CD4-positive, alpha-beta T cell (primary cell): ENCODE measurements at regions of chr10 and their contacts with region 1.

Region 1: DNA sequence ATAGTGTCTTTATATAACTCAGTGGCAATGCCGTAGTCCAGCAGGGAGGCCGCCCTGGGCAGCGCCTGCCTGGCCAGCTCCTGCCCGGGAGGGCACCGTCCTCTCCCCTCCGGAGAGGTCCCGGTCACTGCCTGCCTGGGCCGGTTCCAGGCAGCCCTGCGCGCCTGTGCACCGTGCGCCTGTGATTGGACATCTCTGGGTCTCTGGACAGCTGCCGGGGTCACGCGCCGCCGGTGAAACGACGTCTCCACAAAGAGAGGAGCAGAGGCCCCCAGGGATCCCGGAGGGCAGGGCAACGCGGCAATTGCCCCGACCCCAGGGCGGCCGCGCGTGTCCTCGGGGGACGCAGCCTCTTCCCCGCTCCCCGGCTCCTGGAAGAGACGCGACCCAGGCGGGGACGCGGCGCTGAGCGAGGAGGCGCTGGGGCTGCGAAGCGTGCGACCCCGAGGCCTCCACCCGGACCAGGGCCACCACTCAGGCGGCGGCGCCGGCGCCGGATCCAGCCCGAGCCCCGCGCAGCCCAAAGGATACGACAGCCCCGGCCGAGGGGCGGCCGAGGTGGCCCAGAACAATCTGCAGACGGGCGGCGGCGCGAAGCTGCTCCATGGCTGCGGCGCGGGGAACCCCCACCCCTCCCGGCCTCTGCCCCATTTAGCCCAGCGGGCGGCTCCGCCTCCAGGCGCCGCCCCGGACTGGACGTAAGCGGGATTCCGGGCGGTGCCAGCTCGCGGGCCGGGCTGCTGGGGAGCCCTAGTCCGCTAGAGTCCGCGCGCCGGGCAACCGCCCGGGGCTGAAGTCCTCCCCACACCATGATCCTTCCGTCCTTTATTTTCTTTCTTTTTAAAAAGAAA is at the start of gene PHYH:
- DNase-seq: peak; percentile 58 to 94 (median 74)
- ATAC-seq: peak; percentile 50
- H3K4me3 ChIP-seq: peak within 1 kb of the TSS; percentile 71
- H3K4me3 Mint-ChIP-seq: peak within 1 kb of the TSS; percentile 91
- H3K27ac ChIP-seq: peak within 1 kb of the TSS; percentile 85 to 89
- H3K27ac Mint-ChIP-seq: peak within 1 kb of the TSS; percentile 94
- H3K4me1 ChIP-seq: peaks cover 36% of the 10 kb centered on the region
- H3K4me1 Mint-ChIP-seq: peaks cover 24% of the 10 kb centered on the region
- H3K27me3 ChIP-seq: no peaks in the 10 kb centered on the region
- H3K27me3 Mint-ChIP-seq: no peaks in the 10 kb centered on the region
- CTCF ChIP-seq: no peak
- total RNA-seq, gene PHYH: 8.5 to 10.0 TPM

Region 2: DNA sequence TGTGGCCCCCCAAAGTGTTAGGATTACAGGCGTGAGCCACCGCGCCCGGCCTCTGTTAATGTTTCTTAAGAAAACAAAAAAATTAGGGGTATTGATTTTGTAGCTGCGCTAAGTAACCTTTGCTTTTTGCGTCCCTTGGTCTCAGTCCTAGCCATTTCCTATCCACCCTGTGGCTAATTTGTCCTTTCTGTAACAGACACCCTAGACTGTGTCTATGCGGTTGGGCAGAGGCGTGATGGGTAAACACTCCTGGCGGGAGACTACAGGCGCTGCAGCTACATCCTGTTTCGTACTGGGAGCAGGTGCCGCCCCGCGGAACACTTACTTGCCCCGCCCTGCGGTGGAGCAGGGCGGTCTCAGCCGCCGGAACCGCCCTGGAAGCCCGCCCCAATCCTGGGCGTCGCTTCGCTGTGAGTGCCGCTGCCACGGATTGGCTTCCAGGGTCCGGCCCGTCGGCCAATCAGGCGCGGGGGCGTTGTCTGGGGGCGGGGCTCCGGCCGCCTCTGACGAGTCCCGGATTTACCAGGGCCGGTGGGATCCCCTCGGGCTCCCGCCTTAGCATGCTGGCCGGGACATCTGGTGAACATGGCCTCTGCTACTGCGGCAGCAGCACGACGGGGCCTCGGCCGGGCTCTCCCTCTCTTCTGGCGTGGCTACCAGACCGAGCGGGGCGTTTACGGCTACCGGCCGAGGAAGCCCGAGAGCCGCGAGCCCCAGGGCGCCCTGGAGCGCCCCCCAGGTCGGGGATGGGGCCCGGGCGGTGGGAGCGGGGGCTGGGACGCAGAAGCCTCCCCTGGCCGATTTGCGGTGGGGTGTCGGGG is 1231.0 kb before region 1 on chr10 and contains the start of gene DHTKD1:
- CTCF ChIA-PET with region 1: no interaction called
- POLR2A ChIA-PET with region 1: no interaction called
- intact Hi-C with region 1: loop called in 1 of 2 experiments (anchors 5 kb)
- DNase-seq: peak; percentile 95 to 99 (median 98)
- ATAC-seq: peak; percentile 98
- H3K4me3 ChIP-seq: peak within 1 kb of the TSS; percentile 85
- H3K4me3 Mint-ChIP-seq: peak within 1 kb of the TSS; percentile 91
- H3K27ac ChIP-seq: peak within 1 kb of the TSS; percentile 73 to 78
- H3K27ac Mint-ChIP-seq: peak within 1 kb of the TSS; percentile 95
- H3K4me1 ChIP-seq: peaks cover 15% of the 10 kb centered on the region
- H3K4me1 Mint-ChIP-seq: peaks cover 16% of the 10 kb centered on the region
- H3K27me3 ChIP-seq: no peaks in the 10 kb centered on the region
- H3K27me3 Mint-ChIP-seq: no peaks in the 10 kb centered on the region
- CTCF ChIP-seq: peak; percentile 27
- total RNA-seq, gene DHTKD1: 5.1 to 5.3 TPM

Region 3: GRCh38 chr10:13099666-13100348 is 199.9 kb before region 1 on chr10 and contains the start of gene OPTN:
- CTCF ChIA-PET with region 1: interaction called, 14 read pairs
- POLR2A ChIA-PET with region 1: interaction called, 22 read pairs
- intact Hi-C with region 1: loop called in 1 of 2 experiments (anchors 2 kb)
- DNase-seq: peak; percentile 63 to 92 (median 76)
- ATAC-seq: peak; percentile 79
- H3K4me3 ChIP-seq: peak within 1 kb of the TSS; percentile 94
- H3K4me3 Mint-ChIP-seq: peak within 1 kb of the TSS; percentile 94
- H3K27ac ChIP-seq: peak within 1 kb of the TSS; percentile 90 to 92
- H3K27ac Mint-ChIP-seq: peak within 1 kb of the TSS; percentile 95
- H3K4me1 ChIP-seq: peaks cover 48% of the 10 kb centered on the region
- H3K4me1 Mint-ChIP-seq: peaks cover 51% of the 10 kb centered on the region
- H3K27me3 ChIP-seq: no peaks in the 10 kb centered on the region
- H3K27me3 Mint-ChIP-seq: no peaks in the 10 kb centered on the region
- CTCF ChIP-seq: peak; percentile 42
- total RNA-seq, gene OPTN: 86.8 to 99.6 TPM

Region 4: GRCh38 chr10:13160934-13161856 is 138.5 kb before region 1 on chr10 and contains the start of gene MCM10:
- CTCF ChIA-PET with region 1: interaction called, 14 read pairs
- POLR2A ChIA-PET with region 1: interaction called, 39 read pairs
- intact Hi-C with region 1: loop called (anchors 1 kb)
- DNase-seq: peak; percentile 93 to 99 (median 96)
- ATAC-seq: peak; percentile 100
- H3K4me3 ChIP-seq: peak within 1 kb of the TSS; percentile 53
- H3K4me3 Mint-ChIP-seq: peak within 1 kb of the TSS; percentile 91
- H3K27ac ChIP-seq: peak within 1 kb of the TSS in 1 of 2 donors; percentile 24
- H3K27ac Mint-ChIP-seq: peak within 1 kb of the TSS; percentile 72
- H3K4me1 ChIP-seq: peaks cover 12% of the 10 kb centered on the region
- H3K4me1 Mint-ChIP-seq: peaks cover 16% of the 10 kb centered on the region
- H3K27me3 ChIP-seq: no peaks in the 10 kb centered on the region
- H3K27me3 Mint-ChIP-seq: no peaks in the 10 kb centered on the region
- CTCF ChIP-seq: peak; percentile 94
- total RNA-seq, gene MCM10: 0.16 to 0.50 TPM

Region 5: DNA sequence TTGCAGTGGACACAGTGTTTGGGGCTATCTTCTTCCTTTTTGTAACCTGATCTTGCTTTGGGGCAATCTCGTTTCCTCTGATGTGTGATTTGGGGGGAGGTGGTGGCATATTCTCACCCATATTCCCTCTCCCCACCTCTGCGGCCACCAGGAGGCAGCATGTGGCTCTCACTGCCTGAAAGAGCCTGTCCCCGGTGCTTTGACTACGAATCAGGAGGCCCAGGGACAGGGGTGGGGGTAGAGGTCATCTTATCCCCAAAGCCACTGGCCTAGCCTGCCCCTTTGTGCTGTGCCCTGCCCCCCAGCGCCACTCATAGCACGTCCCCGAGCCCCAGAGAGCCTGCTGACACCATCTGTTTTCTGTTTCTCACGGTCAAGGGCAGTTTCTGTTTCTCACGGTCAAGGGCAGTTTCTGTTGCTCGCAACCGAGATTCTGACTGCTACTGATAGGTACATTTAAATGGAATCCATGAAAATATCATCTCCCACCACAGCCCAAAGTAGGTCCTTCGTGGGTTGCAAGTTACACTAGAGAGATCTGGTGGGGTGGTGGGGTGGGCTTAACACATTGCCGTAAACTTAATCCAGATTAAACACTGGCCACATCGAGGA is 28.0 kb before region 1 on chr10:
- CTCF ChIA-PET with region 1: interaction called, 17 read pairs
- POLR2A ChIA-PET with region 1: interaction called, 11 read pairs
- intact Hi-C with region 1: loop called in 1 of 2 experiments (anchors 1 kb)
- DNase-seq: peak; percentile 22 to 72 (median 54)
- ATAC-seq: peak; percentile 65
- H3K4me3 ChIP-seq: no peak overlapping the region
- H3K4me3 Mint-ChIP-seq: no peak overlapping the region
- H3K27ac ChIP-seq: no peak overlapping the region
- H3K27ac Mint-ChIP-seq: no peak overlapping the region
- H3K4me1 ChIP-seq: peaks cover 7% of the 10 kb centered on the region
- H3K4me1 Mint-ChIP-seq: no peaks in the 10 kb centered on the region
- H3K27me3 ChIP-seq: no peaks in the 10 kb centered on the region
- H3K27me3 Mint-ChIP-seq: no peaks in the 10 kb centered on the region
- CTCF ChIP-seq: peak; percentile 33

Region 6: DNA sequence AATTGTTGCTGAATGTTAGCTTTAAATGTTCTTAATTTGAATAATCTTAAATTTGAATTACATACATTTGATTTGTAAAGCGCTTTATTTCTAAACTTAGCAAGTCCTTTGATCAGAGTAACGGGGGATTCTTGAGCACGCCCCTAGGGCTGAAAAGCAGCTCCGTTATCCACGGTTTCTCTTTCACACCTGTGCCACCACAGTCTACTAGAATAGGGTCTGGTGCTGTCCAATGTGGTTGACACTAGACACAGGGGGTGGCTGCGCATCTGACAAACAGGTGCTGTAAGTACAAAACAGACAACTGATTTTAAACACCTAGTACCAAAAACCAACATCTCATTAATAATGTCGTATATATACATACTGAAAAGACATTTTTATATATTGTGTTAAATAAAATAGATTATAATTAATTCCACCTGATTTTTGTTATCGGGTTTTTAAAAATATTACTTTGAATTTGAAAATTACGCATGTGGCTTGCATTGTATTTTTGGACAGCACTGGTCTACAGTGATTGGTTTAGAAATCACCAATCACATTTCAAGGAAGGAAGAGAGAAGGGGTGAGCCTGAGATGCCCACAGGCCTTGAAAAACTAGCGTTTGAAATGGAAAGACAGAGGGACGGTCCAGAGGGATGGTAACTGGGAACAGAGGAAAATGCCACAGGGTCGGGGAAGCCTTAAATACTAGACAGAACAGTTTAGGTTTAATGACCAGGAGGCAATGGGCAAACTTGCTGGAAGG is 41.1 kb after region 1 on chr10:
- CTCF ChIA-PET with region 1: interaction called, 9 read pairs
- POLR2A ChIA-PET with region 1: interaction called, 27 read pairs
- intact Hi-C with region 1: no loop called
- DNase-seq: peak in 5 of 14 experiments; percentile 4 to 58 (median 49)
- ATAC-seq: peak; percentile 85
- H3K4me3 ChIP-seq: peak overlapping the region; percentile 13
- H3K4me3 Mint-ChIP-seq: peak overlapping the region; percentile 86
- H3K27ac ChIP-seq: no peak overlapping the region
- H3K27ac Mint-ChIP-seq: peak overlapping the region; percentile 92
- H3K4me1 ChIP-seq: peaks cover 11% of the 10 kb centered on the region
- H3K4me1 Mint-ChIP-seq: peaks cover 67% of the 10 kb centered on the region
- H3K27me3 ChIP-seq: no peaks in the 10 kb centered on the region
- H3K27me3 Mint-ChIP-seq: no peaks in the 10 kb centered on the region
- CTCF ChIP-seq: no peak

Region 7: GRCh38 chr10:13586676-13587355 is 287.2 kb after region 1 on chr10 and contains the start of gene PRPF18:
- CTCF ChIA-PET with region 1: no interaction called
- POLR2A ChIA-PET with region 1: interaction called, 4 read pairs
- intact Hi-C with region 1: loop called in 1 of 2 experiments (anchors 2 kb)
- DNase-seq: peak; percentile 92 to 96 (median 95)
- ATAC-seq: peak; percentile 99
- H3K4me3 ChIP-seq: peak within 1 kb of the TSS; percentile 71
- H3K4me3 Mint-ChIP-seq: peak within 1 kb of the TSS; percentile 99
- H3K27ac ChIP-seq: peak within 1 kb of the TSS in 1 of 2 donors; percentile 26
- H3K27ac Mint-ChIP-seq: peak within 1 kb of the TSS; percentile 85
- H3K4me1 ChIP-seq: peaks cover 13% of the 10 kb centered on the region
- H3K4me1 Mint-ChIP-seq: peaks cover 47% of the 10 kb centered on the region
- H3K27me3 ChIP-seq: peaks cover 12 to 15% of the 10 kb centered on the region in 2 experiments
- H3K27me3 Mint-ChIP-seq: peaks cover 32% of the 10 kb centered on the region
- CTCF ChIP-seq: peak; percentile 94
- total RNA-seq, gene PRPF18: 20.7 to 22.7 TPM